ENCODE measurements at regions of chr17 and their contacts with region 1.

Region 1: GRCh38 chr17:80791758-80792284 is 199.8 kb upstream of the CHMP6 start:
- DNase-seq: peak in 4 of 5 donors; percentile 22 to 75 (median 30)
- H3K4me3 ChIP-seq: peak overlapping the region in 1 of 2 donors; percentile 13
- H3K4me3 Mint-ChIP-seq: peak overlapping the region; percentile 64 to 92 (median 86)
- H3K27ac ChIP-seq: peak overlapping the region; percentile 50
- H3K27ac Mint-ChIP-seq: peak overlapping the region; percentile 87 to 96 (median 95)
- H3K4me1 ChIP-seq: peaks cover 69% of the 10 kb centered on the region
- H3K4me1 Mint-ChIP-seq: peaks cover 61 to 81% (median 65%) of the 10 kb centered on the region in 4 donors
- H3K27me3 ChIP-seq: no peaks in the 10 kb centered on the region
- H3K27me3 Mint-ChIP-seq: no peaks in the 10 kb centered on the region

Region 2: DNA sequence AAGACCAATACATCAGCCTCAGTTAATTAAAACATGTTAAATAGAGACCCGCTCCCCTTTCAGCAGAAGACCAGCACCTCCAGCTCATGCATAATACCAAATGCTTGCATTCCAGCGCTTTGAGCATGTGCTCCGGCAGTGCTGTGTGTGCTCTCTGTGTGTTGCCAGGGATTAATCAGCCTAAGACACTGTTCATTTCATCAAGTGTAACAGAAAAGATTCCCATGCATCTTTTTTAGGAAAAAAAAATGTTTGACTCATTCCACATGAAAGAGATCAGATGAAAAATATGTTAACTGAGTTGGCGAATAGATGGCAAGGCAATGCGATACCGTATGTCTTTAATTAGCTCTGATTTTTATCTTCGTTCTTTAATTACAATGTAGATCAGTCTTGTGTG is 59.6 kb before region 1 on chr17:
- CTCF ChIA-PET with region 1: interaction called, 6 read pairs
- POLR2A ChIA-PET with region 1: interaction called, 3 read pairs
- intact Hi-C with region 1: loop called (anchors 5 kb)
- DNase-seq: no peak
- H3K4me3 ChIP-seq: no peak overlapping the region
- H3K4me3 Mint-ChIP-seq: peak overlapping the region in 1 of 8 donors; percentile 21
- H3K27ac ChIP-seq: no peak overlapping the region
- H3K27ac Mint-ChIP-seq: peak overlapping the region in 4 of 7 donors; percentile 3 to 79 (median 14)
- H3K4me1 ChIP-seq: peaks cover 24% of the 10 kb centered on the region
- H3K4me1 Mint-ChIP-seq: peaks cover 11 to 51% (median 25%) of the 10 kb centered on the region in 4 donors
- H3K27me3 ChIP-seq: no peaks in the 10 kb centered on the region
- H3K27me3 Mint-ChIP-seq: no peaks in the 10 kb centered on the region

Region 3: DNA sequence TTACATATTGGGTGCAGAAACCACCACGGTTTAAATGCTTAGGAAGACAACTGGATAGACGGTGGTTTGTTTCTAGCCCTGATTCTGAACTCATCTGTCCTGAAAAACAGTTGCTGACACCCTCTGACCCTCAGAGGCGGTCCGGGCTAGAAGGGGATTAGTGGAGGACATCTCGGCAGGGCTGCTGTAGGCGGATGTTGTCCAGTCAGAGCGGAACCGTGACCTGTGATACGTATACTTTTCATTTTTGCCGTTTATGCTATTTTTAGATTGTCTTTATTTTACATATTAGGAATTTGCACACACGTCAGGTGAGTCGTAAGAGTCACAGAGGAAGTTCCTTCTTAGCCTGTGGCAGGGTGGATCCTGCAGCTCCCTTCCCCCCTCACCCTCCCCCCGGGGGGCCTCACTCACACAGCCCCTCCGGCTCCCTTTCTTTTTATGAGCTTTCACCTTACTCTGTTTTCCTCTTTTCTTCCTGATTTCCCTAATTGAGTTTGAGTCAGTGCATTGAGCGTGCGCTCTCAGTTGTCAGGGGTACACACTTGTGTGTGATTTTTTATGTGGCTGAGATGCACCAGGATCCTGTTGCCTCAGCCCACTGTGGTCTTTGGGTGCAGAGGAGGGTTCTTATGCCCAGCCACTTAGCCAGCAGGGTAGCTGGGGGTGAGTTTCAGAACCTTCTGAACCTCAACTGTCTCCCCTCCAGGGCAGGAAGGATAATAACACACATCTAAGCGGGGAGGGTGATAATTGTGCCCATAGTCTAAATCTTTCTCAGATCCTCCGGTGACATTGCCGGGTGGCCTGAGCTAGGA is 11.2 kb before region 1 on chr17:
- CTCF ChIA-PET with region 1: interaction called, 29 read pairs
- POLR2A ChIA-PET with region 1: interaction called, 51 read pairs
- intact Hi-C with region 1: loop called (anchors 1 kb)
- DNase-seq: no peak
- H3K4me3 ChIP-seq: peak overlapping the region in 1 of 2 donors; percentile 23
- H3K4me3 Mint-ChIP-seq: peak overlapping the region; percentile 37 to 91 (median 66)
- H3K27ac ChIP-seq: peak overlapping the region; percentile 42
- H3K27ac Mint-ChIP-seq: peak overlapping the region; percentile 70 to 93 (median 78)
- H3K4me1 ChIP-seq: peaks cover 58% of the 10 kb centered on the region
- H3K4me1 Mint-ChIP-seq: peaks cover 37 to 81% (median 67%) of the 10 kb centered on the region in 4 donors
- H3K27me3 ChIP-seq: no peaks in the 10 kb centered on the region
- H3K27me3 Mint-ChIP-seq: no peaks in the 10 kb centered on the region

Region 4: DNA sequence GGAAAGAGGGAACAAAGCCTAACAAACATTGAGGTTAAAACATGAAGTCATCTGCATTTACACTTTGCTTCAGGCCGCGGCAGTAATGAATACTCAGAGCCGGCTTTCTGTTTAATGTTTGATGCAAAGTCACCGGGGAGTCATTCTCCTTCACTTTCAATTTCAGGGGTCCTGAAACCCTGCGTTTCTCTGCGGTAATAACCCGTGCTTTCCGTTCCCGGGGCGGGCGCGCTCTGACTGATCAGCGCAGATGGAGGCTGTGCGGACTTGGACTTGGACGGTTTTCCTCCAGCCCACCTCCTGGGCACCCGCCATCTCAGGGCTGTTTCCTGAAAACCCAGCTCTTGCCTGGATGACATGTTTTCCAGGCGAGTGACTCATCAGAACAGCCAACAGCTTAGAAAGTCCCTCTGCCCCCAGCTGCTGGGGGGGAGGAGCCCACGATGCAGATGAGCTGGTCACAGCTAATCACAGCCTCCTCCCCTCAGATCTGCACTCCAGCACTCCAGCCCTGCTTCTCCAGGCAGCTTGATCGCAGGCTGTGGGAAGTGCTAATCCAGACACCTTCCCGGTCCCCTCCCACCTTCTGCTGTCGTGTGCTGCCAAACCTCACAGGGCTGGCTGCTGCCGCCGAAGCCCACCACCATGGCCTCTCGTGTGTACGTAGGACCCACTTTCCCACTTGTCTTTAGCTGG is 41.2 kb after region 1 on chr17:
- CTCF ChIA-PET with region 1: interaction called, 3 read pairs
- POLR2A ChIA-PET with region 1: interaction called, 9 read pairs
- intact Hi-C with region 1: loop called (anchors 2 kb)
- DNase-seq: peak; percentile 64 to 87 (median 70)
- H3K4me3 ChIP-seq: peak overlapping the region; percentile 55 to 57
- H3K4me3 Mint-ChIP-seq: peak overlapping the region; percentile 74 to 89 (median 86)
- H3K27ac ChIP-seq: peak overlapping the region; percentile 62
- H3K27ac Mint-ChIP-seq: peak overlapping the region; percentile 90 to 97 (median 93)
- H3K4me1 ChIP-seq: peaks cover 26% of the 10 kb centered on the region
- H3K4me1 Mint-ChIP-seq: peaks cover 21 to 33% (median 25%) of the 10 kb centered on the region in 4 donors
- H3K27me3 ChIP-seq: no peaks in the 10 kb centered on the region
- H3K27me3 Mint-ChIP-seq: no peaks in the 10 kb centered on the region

Measured in CD4-positive, alpha-beta memory T cell (primary cell).